Prostate gland (tissue), 2 donors: ENCODE measurements at regions of chrX and their contacts with region 1.

Region 1: DNA sequence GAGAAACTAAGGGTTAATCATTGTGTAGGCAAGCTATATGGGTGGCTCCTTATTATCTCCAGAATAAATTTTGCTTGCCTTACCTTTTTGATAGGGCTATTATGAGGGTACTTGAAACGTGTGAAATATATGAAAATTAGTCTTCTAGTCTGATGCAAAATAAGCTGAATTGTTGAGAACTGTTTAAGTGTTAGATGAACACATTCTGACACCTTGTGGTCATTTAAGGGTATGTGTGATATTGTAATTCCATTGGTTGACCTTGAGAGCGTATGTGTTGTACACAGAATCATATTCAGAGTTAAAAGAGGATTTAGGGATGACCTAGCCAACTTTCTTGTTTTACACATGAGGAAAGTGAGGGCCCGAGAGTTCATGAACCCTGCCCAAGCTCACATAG is 44.6 kb upstream of the LINC00632 start:
- DNase-seq: no peak
- H3K4me3 ChIP-seq: no peak overlapping the region
- H3K27ac ChIP-seq: no peak overlapping the region
- H3K4me1 ChIP-seq: no peaks in the 10 kb centered on the region
- H3K27me3 ChIP-seq: no peaks in the 10 kb centered on the region
- CTCF ChIP-seq: peak in 2 of 4 experiments; percentile 10 to 18
- POLR2A ChIP-seq: no peak

Region 2: DNA sequence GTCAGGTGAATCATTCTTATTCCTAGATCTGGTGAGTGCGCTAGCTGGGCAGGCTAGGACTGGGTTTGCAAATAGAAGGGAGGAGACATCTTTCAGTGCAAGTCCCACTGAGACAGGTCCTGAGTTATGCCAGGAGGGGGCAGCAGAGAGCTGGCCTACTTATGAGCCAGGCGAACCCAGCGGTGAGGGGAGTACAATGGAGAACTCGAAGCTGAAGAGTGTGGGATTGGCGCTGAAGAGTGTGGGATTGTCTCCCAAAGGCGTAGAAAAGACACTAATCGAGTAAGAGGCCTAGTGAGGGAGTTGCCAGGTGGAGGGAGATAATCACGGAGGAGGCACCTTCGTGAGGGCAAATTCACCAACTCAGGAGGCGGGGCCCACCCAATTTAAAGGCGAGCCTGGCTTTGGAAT is 607.9 kb before region 1 on chrX:
- intact Hi-C with region 1: loop called (anchors 10 kb)
- DNase-seq: peak; percentile 39
- H3K4me3 ChIP-seq: no peak overlapping the region
- H3K27ac ChIP-seq: no peak overlapping the region
- H3K4me1 ChIP-seq: no peaks in the 10 kb centered on the region
- H3K27me3 ChIP-seq: no peaks in the 10 kb centered on the region
- CTCF ChIP-seq: peak; percentile 30 to 55 (median 49)
- POLR2A ChIP-seq: no peak